Activated CD4-positive, alpha-beta memory T cell treated with anti-CD3 and anti-CD28 coated beads for 36 hours (primary cell): ENCODE measurements at regions of chr5 and their contacts with region 1.

Region 1: DNA sequence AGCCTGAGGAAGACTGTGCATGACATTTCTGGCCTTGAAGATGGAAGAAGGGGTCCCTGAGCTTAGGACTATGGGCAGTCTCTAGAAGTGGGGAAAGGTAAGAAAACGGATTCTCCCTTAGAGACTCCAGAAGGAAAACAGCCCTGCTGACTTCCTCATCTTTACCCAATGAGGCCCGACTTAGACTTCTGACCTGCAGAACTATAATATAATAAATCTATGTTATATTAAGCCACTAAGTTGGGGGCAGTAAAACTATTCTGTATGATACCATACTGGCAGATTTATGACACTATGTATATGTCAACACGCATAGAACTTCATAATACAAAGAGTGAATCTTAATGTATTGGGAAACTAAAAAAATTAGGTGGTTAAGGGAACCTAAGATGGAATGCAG is 422.0 kb downstream of the PLK2 start:
- DNase-seq: no peak
- H3K4me3 Mint-ChIP-seq: no peak overlapping the region
- H3K27ac Mint-ChIP-seq: no peak overlapping the region
- H3K4me1 Mint-ChIP-seq: no peaks in the 10 kb centered on the region
- H3K27me3 Mint-ChIP-seq: no peaks in the 10 kb centered on the region

Region 2: DNA sequence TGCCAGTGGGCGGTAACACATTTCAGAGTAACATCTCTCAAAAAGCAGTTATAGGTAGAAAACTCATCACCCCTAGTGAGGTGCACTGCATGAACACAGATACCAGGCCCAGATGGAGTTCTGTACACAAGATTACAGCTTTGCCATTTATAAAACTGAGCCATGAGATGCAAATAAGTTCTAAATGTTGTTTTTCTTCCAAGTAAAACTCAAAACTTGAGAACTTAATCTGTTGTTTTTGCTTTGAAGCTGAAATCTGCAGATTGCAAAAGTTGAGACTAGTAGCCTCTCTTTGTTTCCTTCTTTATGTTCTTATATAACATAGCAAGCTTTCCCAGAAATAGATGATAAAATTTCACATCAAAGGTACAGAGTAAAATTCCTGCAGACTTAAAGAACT is 12.1 kb before region 1 on chr5:
- CTCF ChIA-PET with region 1: interaction called, 3 read pairs
- POLR2A ChIA-PET with region 1: no interaction called
- intact Hi-C with region 1: loop called (anchors 1 kb)
- DNase-seq: no peak
- H3K4me3 Mint-ChIP-seq: no peak overlapping the region
- H3K27ac Mint-ChIP-seq: no peak overlapping the region
- H3K4me1 Mint-ChIP-seq: no peaks in the 10 kb centered on the region
- H3K27me3 Mint-ChIP-seq: no peaks in the 10 kb centered on the region